Panc1 (cell line): ENCODE measurements at regions of chr6 and their contacts with region 1.

Region 1: DNA sequence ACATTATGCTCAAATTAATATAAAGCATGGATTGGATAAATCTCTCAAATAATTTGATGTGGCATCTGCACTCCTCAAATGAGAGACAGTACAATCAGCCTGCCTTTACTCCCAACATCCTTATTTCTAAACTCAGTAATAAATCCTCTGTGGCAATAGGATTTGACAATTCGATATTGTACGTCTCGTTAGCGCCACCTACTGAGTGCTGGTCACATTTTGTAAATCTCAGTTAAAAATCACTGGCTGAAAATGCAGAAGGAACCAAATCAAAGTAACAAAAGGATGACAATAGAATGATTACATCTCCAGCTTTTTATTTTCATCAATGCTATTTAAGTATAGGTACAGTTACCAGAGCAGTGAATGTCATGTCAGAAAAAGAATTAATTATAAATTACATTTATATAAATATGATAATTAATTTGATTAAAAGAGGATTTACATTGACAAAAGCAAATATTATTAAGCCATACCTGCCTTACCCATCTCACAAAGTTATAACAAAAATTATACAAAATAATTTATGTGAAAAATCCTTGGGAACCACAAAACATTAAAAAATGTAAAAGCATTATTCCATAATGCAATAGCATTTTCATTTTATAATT is 20.2 kb upstream of the GJE1 start:
- DNase-seq: peak; percentile 61
- ATAC-seq: peak; percentile 74
- H3K4me3 ChIP-seq: no peak overlapping the region
- H3K27ac ChIP-seq: no peak overlapping the region
- H3K4me1 ChIP-seq: no peaks in the 10 kb centered on the region; the same call in 1 of the 2 replicates
- H3K27me3 ChIP-seq: no peaks in the 10 kb centered on the region
- CTCF ChIP-seq: peak; percentile 79; the same call in 1 of the 2 replicates

Region 2: GRCh38 chr6:141976994-141977393 is 135.6 kb before region 1 on chr6:
- CTCF ChIA-PET with region 1: no interaction called
- POLR2A ChIA-PET with region 1: no interaction called
- in situ Hi-C with region 1: no loop called
- intact Hi-C with region 1: no loop called
- DNase-seq: no peak
- ATAC-seq: no peak
- H3K4me3 ChIP-seq: no peak overlapping the region
- H3K27ac ChIP-seq: no peak overlapping the region
- H3K4me1 ChIP-seq: no peaks in the 10 kb centered on the region
- H3K27me3 ChIP-seq: no peaks in the 10 kb centered on the region
- CTCF ChIP-seq: no peak

Region 3: GRCh38 chr6:141988954-141989705 is 123.4 kb before region 1 on chr6:
- CTCF ChIA-PET with region 1: no interaction called
- POLR2A ChIA-PET with region 1: no interaction called
- in situ Hi-C with region 1: no loop called
- intact Hi-C with region 1: loop called (anchors 1 kb)
- DNase-seq: peak; percentile 69
- ATAC-seq: peak; percentile 82; the same call in 1 of the 2 replicates
- H3K4me3 ChIP-seq: no peak overlapping the region
- H3K27ac ChIP-seq: no peak overlapping the region; the same call in 1 of the 2 replicates
- H3K4me1 ChIP-seq: peaks cover 3% of the 10 kb centered on the region; the same call in 1 of the 2 replicates
- H3K27me3 ChIP-seq: no peaks in the 10 kb centered on the region
- CTCF ChIP-seq: peak; percentile 84